Psoas muscle (tissue), 8 donors: ENCODE measurements at regions of chrX and their contacts with region 1.

Region 1: GRCh38 chrX:17435466-17435865 is 60.5 kb downstream of the NHS start:
- DNase-seq: no peak
- ATAC-seq: no peak
- H3K4me3 ChIP-seq: no peak overlapping the region
- H3K27ac ChIP-seq: no peak overlapping the region
- H3K4me1 ChIP-seq: no peaks in the 10 kb centered on the region
- H3K27me3 ChIP-seq: peaks cover 0 to 8% (median 0%) of the 10 kb centered on the region in 3 donors
- CTCF ChIP-seq: no peak

Region 2: DNA sequence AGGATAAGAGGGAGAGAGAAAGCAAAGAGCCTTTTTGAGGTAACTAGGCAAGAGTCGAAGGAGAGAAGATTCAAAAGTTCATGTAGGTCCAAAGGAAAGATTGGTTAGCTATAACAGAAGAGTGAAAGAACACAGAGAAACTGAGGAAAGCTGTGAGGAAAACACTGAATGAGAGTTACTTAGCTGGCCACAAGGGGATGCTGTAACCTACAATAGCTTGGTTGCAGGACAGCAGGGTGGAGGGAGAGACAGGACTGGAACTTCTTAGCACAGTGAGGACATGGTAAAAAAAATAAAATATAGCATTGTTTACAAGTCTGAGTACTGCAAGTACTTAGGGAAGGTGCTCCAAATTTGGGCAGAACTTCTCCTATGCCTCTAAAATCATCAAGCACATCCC is 377.3 kb after region 1 on chrX:
- intact Hi-C with region 1: loop called in 1 of 2 experiments (anchors 5 kb)
- DNase-seq: no peak
- ATAC-seq: no peak
- H3K4me3 ChIP-seq: no peak overlapping the region
- H3K27ac ChIP-seq: no peak overlapping the region
- H3K4me1 ChIP-seq: no peaks in the 10 kb centered on the region
- H3K27me3 ChIP-seq: peaks cover 0 to 3% (median 0%) of the 10 kb centered on the region in 3 donors
- CTCF ChIP-seq: peak; percentile 35